Colonic mucosa (tissue), 4 donors: ENCODE measurements at regions of chr2 and their contacts with region 1.

Region 1: DNA sequence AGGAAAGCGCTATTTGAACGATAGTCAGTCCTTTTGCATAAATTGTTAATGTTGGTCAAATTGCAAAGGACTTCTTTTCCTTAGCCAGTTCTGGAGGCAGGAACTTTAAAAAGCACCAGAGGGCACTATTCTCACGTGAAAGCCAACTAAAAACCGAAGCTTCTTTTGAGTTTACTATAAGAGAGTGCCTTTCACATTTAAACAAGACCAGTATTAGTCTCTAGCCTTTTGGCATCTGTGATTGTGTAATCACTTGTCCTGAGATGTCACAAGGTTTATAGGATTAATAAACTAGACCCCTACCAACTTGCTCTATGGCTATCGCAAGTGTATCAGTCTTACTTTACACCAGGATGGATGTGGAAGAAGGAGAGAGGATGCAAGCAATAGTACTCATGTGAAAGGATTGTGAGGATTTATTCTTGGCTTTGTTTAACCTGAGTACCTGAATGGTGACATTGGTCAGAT is 14.4 kb upstream of the STAT4 start:
- DNase-seq: no peak
- H3K4me3 ChIP-seq: no peak overlapping the region
- H3K27ac ChIP-seq: no peak overlapping the region
- H3K4me1 ChIP-seq: no peaks in the 10 kb centered on the region
- H3K27me3 ChIP-seq: no peaks in the 10 kb centered on the region
- CTCF ChIP-seq: peak; percentile 71

Region 2: GRCh38 chr2:191222507-191222906 is 57.3 kb after region 1 on chr2:
- intact Hi-C with region 1: loop called (anchors 10 kb)
- DNase-seq: no peak
- H3K4me3 ChIP-seq: no peak overlapping the region
- H3K27ac ChIP-seq: no peak overlapping the region
- H3K4me1 ChIP-seq: peaks cover 8% of the 10 kb centered on the region
- H3K27me3 ChIP-seq: no peaks in the 10 kb centered on the region
- CTCF ChIP-seq: no peak

Region 3: GRCh38 chr2:191501561-191502168 is 336.5 kb after region 1 on chr2:
- intact Hi-C with region 1: loop called (anchors 2 kb)
- DNase-seq: no peak
- H3K4me3 ChIP-seq: no peak overlapping the region
- H3K27ac ChIP-seq: no peak overlapping the region
- H3K4me1 ChIP-seq: no peaks in the 10 kb centered on the region
- H3K27me3 ChIP-seq: no peaks in the 10 kb centered on the region
- CTCF ChIP-seq: peak; percentile 57

Region 4: DNA sequence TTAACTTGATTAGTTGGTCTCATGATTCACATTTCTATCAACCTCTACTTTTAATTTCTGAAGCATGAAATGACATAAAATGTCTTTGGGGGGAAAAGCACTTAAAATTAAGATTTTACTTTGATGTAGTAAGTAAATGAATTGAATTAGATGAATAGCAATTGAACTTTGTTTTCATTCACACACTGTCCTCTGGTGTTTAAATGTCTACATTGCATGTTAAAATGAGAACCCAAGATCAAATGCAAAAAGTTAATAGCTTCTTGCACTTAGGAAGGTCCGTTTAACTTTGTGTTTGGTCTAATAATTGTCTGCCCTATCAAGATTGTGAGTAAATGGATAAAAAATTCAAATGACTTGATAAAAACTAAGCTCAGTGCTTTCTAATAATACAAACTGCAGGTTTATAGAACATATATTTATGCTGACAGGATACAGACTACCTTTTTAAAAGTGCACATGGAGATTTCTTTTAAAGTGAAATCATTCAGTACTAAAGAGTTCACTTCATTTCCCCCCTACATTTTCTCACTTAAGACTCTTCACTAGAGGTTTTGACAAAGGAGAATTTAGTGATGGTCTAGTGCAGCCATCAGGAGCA is 356.5 kb after region 1 on chr2:
- intact Hi-C with region 1: loop called (anchors 5 kb)
- DNase-seq: no peak
- H3K4me3 ChIP-seq: no peak overlapping the region
- H3K27ac ChIP-seq: no peak overlapping the region
- H3K4me1 ChIP-seq: no peaks in the 10 kb centered on the region
- H3K27me3 ChIP-seq: no peaks in the 10 kb centered on the region
- CTCF ChIP-seq: peak; percentile 70